Natural killer cell (primary cell): ENCODE measurements at regions of chrX and their contacts with region 1.

Region 1: GRCh38 chrX:72121383-72121782 is 10.3 kb downstream of the RTL5 start:
- DNase-seq: peak; percentile 37 to 68
- ATAC-seq: peak; percentile 75 to 92 (median 86)
- H3K4me3 ChIP-seq: no peak overlapping the region
- H3K4me3 Mint-ChIP-seq: peak overlapping the region; percentile 79
- H3K27ac ChIP-seq: peak overlapping the region; percentile 85
- H3K27ac Mint-ChIP-seq: peak overlapping the region; percentile 89 to 90
- H3K4me1 ChIP-seq: peaks cover 58% of the 10 kb centered on the region
- H3K4me1 Mint-ChIP-seq: peaks cover 68 to 73% of the 10 kb centered on the region in 2 donors
- H3K27me3 ChIP-seq: no peaks in the 10 kb centered on the region
- H3K27me3 Mint-ChIP-seq: peaks cover 2 to 16% of the 10 kb centered on the region in 2 donors
- CTCF ChIP-seq: no peak

Region 2: GRCh38 chrX:71953946-71954345 is 167.4 kb before region 1 on chrX:
- intact Hi-C with region 1: no loop called
- DNase-seq: no peak
- ATAC-seq: no peak
- H3K4me3 ChIP-seq: no peak overlapping the region
- H3K4me3 Mint-ChIP-seq: no peak overlapping the region
- H3K27ac ChIP-seq: no peak overlapping the region
- H3K27ac Mint-ChIP-seq: no peak overlapping the region
- H3K4me1 ChIP-seq: no peaks in the 10 kb centered on the region
- H3K4me1 Mint-ChIP-seq: no peaks in the 10 kb centered on the region
- H3K27me3 ChIP-seq: no peaks in the 10 kb centered on the region
- H3K27me3 Mint-ChIP-seq: peaks cover 0 to 3% of the 10 kb centered on the region in 2 donors
- CTCF ChIP-seq: no peak

Region 3: GRCh38 chrX:71992711-71993110 is 128.7 kb before region 1 on chrX:
- intact Hi-C with region 1: loop called (anchors 2 kb)
- DNase-seq: peak; percentile 70 to 82
- ATAC-seq: peak; percentile 94 to 96 (median 96)
- H3K4me3 ChIP-seq: no peak overlapping the region
- H3K4me3 Mint-ChIP-seq: peak overlapping the region; percentile 79
- H3K27ac ChIP-seq: peak overlapping the region; percentile 87
- H3K27ac Mint-ChIP-seq: peak overlapping the region; percentile 86 to 88
- H3K4me1 ChIP-seq: peaks cover 44% of the 10 kb centered on the region
- H3K4me1 Mint-ChIP-seq: peaks cover 47 to 54% of the 10 kb centered on the region in 2 donors
- H3K27me3 ChIP-seq: no peaks in the 10 kb centered on the region
- H3K27me3 Mint-ChIP-seq: peaks cover 3 to 9% of the 10 kb centered on the region in 2 donors
- CTCF ChIP-seq: no peak

Region 4: GRCh38 chrX:72038016-72038415 is 83.4 kb before region 1 on chrX:
- intact Hi-C with region 1: no loop called
- DNase-seq: no peak
- ATAC-seq: no peak
- H3K4me3 ChIP-seq: no peak overlapping the region
- H3K4me3 Mint-ChIP-seq: no peak overlapping the region
- H3K27ac ChIP-seq: no peak overlapping the region
- H3K27ac Mint-ChIP-seq: no peak overlapping the region
- H3K4me1 ChIP-seq: peaks cover 8% of the 10 kb centered on the region
- H3K4me1 Mint-ChIP-seq: peaks cover 0 to 5% of the 10 kb centered on the region in 2 donors
- H3K27me3 ChIP-seq: no peaks in the 10 kb centered on the region
- H3K27me3 Mint-ChIP-seq: peaks cover 7 to 57% of the 10 kb centered on the region in 2 donors
- CTCF ChIP-seq: no peak

Region 5: GRCh38 chrX:72100824-72101351 is 20.5 kb before region 1 on chrX:
- intact Hi-C with region 1: loop called (anchors 1 kb)
- DNase-seq: peak; percentile 75 to 90
- ATAC-seq: peak; percentile 61 to 85 (median 75)
- H3K4me3 ChIP-seq: peak overlapping the region; percentile 78
- H3K4me3 Mint-ChIP-seq: peak overlapping the region; percentile 92
- H3K27ac ChIP-seq: peak overlapping the region; percentile 96
- H3K27ac Mint-ChIP-seq: peak overlapping the region; percentile 88 to 91
- H3K4me1 ChIP-seq: peaks cover 71% of the 10 kb centered on the region
- H3K4me1 Mint-ChIP-seq: peaks cover 48 to 67% of the 10 kb centered on the region in 2 donors
- H3K27me3 ChIP-seq: no peaks in the 10 kb centered on the region
- H3K27me3 Mint-ChIP-seq: peaks cover 0 to 30% of the 10 kb centered on the region in 2 donors
- CTCF ChIP-seq: no peak

Region 6: DNA sequence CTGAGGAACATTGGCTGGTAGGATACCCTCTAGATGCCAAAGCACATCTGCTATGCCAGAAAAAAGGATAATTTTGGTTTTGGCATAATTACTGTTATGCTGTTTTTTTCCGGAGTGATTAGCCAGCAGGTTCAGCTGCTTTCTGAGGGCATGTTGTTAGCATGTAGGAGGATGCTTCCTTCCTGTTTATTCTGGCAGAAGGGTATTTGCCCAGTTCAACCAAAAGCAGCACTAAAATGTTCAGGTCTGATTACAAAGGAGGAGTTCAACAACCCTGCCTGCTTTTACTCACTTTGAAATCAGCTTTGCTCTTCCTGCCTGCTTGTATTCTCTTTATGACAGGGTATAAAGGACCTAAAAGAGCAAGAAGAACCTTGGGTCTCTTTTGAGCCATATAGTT is 95.6 kb after region 1 on chrX:
- intact Hi-C with region 1: no loop called
- DNase-seq: no peak
- ATAC-seq: no peak
- H3K4me3 ChIP-seq: no peak overlapping the region
- H3K4me3 Mint-ChIP-seq: no peak overlapping the region
- H3K27ac ChIP-seq: no peak overlapping the region
- H3K27ac Mint-ChIP-seq: no peak overlapping the region
- H3K4me1 ChIP-seq: no peaks in the 10 kb centered on the region
- H3K4me1 Mint-ChIP-seq: no peaks in the 10 kb centered on the region
- H3K27me3 ChIP-seq: no peaks in the 10 kb centered on the region
- H3K27me3 Mint-ChIP-seq: no peaks in the 10 kb centered on the region
- CTCF ChIP-seq: no peak